Cardiac septum (tissue), 1 donor: ENCODE measurements at regions of chr3 and their contacts with region 1.

Region 1: GRCh38 chr3:46062679-46063078 is 35.4 kb upstream of the XCR1 start:
- DNase-seq: no peak

Region 2: GRCh38 chr3:45992821-45993221 is 69.9 kb before region 1 on chr3:
- intact Hi-C with region 1: loop called (anchors 2 kb)
- DNase-seq: no peak